AG04449 (cell line): ENCODE measurements at regions of chr17 and their contacts with region 1.

Region 1: DNA sequence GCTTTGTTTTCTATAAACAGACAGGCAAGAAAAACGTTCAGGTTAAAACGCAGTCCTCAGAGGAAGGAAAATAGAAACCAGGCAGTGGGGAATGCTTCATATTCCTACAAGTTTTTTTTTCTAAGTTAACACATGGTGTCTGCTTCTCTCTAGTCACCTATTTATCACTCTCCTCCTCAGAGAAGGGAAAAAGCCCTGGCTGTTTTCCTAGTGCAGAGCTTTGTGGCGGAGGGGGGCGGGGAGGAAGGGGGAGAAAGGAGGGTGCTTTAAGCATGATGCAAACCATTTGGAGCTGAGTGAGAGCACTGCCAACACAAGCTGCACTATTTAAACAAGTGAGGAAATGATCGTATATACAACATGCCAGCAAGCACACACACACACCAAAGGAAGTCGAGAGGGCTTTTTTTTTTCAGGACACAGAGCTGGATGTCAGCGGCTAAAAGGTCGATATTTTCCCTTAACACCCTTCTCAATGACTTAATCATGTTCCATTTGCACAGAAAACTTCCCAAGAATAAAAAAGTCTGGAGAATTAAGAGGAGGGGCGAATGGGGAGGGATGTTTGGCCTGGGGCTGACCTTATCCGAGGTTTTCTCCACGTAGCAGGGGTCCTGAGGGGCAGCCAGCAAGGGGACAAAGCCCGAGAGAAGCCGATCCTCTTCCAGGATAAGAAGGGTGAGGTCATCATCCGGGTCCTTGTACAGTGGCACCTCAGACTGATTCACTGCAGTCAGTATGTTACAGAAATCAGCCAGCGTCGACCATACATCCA is 117.4 kb downstream of the HIC1 start:
- DNase-seq: peak; percentile 97
- H3K4me3 ChIP-seq: peak overlapping the region; percentile 27
- CTCF ChIP-seq: no peak

Region 2: GRCh38 chr17:1967213-1967612 is 205.1 kb before region 1 on chr17:
- CTCF ChIA-PET with region 1: no interaction called
- POLR2A ChIA-PET with region 1: no interaction called
- DNase-seq: no peak
- H3K4me3 ChIP-seq: no peak overlapping the region
- CTCF ChIP-seq: no peak

Region 3: GRCh38 chr17:2215616-2216364 is 43.5 kb after region 1 on chr17:
- CTCF ChIA-PET with region 1: interaction called, 4 read pairs
- POLR2A ChIA-PET with region 1: interaction called, 13 read pairs
- DNase-seq: no peak
- H3K4me3 ChIP-seq: peak overlapping the region; percentile 42
- CTCF ChIP-seq: no peak